ENCODE measurements at regions of chr17 and their contacts with region 1.

Region 1: GRCh38 chr17:70767102-70767701 is 597.9 kb downstream of the KCNJ2 start:
- DNase-seq: peak; percentile 25 to 61 (median 57)
- H3K4me3 ChIP-seq: no peak overlapping the region
- H3K27ac ChIP-seq: no peak overlapping the region
- H3K4me1 ChIP-seq: no peaks in the 10 kb centered on the region
- H3K27me3 ChIP-seq: peaks cover 0 to 1% (median 0%) of the 10 kb centered on the region in 5 experiments

Region 2: DNA sequence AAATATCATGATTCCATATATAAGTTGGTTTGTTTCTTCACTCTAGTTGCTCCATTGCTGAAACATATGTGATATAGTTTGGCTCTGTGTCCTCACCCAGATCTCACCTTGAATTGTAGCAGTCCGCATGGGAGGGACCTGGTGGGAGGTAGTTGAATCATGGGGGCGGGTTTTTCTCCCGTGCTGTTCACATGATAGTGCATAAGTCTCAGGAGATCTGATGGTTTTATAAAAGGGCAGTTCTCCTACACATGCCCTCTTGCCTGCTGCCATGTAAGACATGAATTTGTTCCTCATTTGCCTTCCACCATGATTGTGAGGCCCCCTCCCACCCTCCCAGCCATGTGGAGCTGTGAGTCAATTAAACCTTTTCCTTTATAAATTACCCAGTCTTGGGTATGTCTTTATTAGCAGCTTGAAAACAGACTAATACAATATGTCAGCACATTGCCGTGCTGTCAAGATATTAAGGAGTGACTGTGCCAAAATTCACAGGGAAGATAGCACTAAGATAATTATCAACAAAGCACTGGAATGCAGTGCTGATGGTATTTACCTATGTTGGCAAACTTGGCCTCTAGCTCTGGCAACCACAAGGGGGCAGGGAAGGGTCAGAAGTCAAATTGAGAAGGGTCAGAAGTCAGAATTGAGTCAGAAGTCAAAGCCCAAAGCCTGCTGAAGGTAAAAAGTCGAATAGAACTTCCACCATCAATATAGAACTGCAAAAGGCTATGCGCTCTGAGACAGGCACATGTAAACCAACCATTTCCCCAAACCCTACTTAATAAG is 317.8 kb after region 1 on chr17:
- CTCF ChIA-PET with region 1: interaction called, 10 read pairs
- POLR2A ChIA-PET with region 1: no interaction called
- DNase-seq: peak; percentile 15 to 27 (median 17)
- H3K4me3 ChIP-seq: no peak overlapping the region
- H3K27ac ChIP-seq: no peak overlapping the region
- H3K4me1 ChIP-seq: no peaks in the 10 kb centered on the region
- H3K27me3 ChIP-seq: no peaks in the 10 kb centered on the region

Region 3: GRCh38 chr17:71460943-71461342 is 693.7 kb after region 1 on chr17:
- CTCF ChIA-PET with region 1: interaction called, 19 read pairs
- POLR2A ChIA-PET with region 1: no interaction called
- DNase-seq: peak in 2 of 3 donors; percentile 2 to 20
- H3K4me3 ChIP-seq: no peak overlapping the region
- H3K27ac ChIP-seq: no peak overlapping the region
- H3K4me1 ChIP-seq: no peaks in the 10 kb centered on the region
- H3K27me3 ChIP-seq: peaks cover 0 to 2% (median 0%) of the 10 kb centered on the region in 5 experiments

Region 4: GRCh38 chr17:72539981-72540897 is 1773.0 kb after region 1 on chr17:
- CTCF ChIA-PET with region 1: interaction called, 17 read pairs
- POLR2A ChIA-PET with region 1: no interaction called
- DNase-seq: peak; percentile 34 to 64 (median 53)
- H3K4me3 ChIP-seq: peak overlapping the region in 6 of 7 experiments; percentile 10 to 63 (median 50)
- H3K27ac ChIP-seq: no peak overlapping the region
- H3K4me1 ChIP-seq: peaks cover 0 to 7% (median 3%) of the 10 kb centered on the region in 4 experiments
- H3K27me3 ChIP-seq: peaks cover 0 to 23% (median 11%) of the 10 kb centered on the region in 5 experiments

Measured in common myeloid progenitor, CD34-positive (primary cell).